ENCODE measurements at regions of chr6 and their contacts with region 1.

Region 1: GRCh38 chr6:81889377-81890053 is 137.0 kb upstream of the TENT5A start:
- DNase-seq: no peak
- H3K4me3 ChIP-seq: no peak overlapping the region
- H3K27ac ChIP-seq: no peak overlapping the region
- H3K4me1 ChIP-seq: peaks cover 1% of the 10 kb centered on the region
- H3K27me3 ChIP-seq: no peaks in the 10 kb centered on the region
- CTCF ChIP-seq: no peak
- EP300 ChIP-seq: no peak
- POLR2A ChIP-seq: no peak

Region 2: GRCh38 chr6:81766482-81767069 is 122.9 kb before region 1 on chr6:
- intact Hi-C with region 1: loop called in 1 of 4 experiments (anchors 10 kb)
- DNase-seq: no peak
- H3K4me3 ChIP-seq: no peak overlapping the region
- H3K27ac ChIP-seq: no peak overlapping the region
- H3K4me1 ChIP-seq: peaks cover 3% of the 10 kb centered on the region
- H3K27me3 ChIP-seq: no peaks in the 10 kb centered on the region
- CTCF ChIP-seq: no peak
- EP300 ChIP-seq: no peak
- POLR2A ChIP-seq: no peak

Region 3: DNA sequence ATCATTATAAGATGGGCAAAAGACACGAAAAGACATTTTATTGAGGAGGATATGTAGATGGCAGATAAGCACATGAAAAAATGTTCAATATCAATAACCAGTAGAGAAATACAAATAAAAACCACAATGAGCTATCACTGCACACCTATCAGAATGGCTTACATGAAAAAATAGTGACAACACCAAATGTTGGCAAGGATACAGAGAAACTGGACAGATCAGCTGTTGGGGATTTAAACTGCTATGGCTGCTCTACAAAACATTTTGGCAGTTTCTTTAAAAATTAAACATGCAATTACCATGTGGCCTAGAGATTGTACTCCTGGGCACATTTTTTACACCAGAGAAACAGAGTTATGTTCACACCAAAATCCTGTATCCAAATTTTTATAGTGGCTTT is 35.7 kb after region 1 on chr6:
- intact Hi-C with region 1: no loop called
- DNase-seq: no peak
- H3K4me3 ChIP-seq: no peak overlapping the region
- H3K27ac ChIP-seq: no peak overlapping the region
- H3K4me1 ChIP-seq: no peaks in the 10 kb centered on the region
- H3K27me3 ChIP-seq: no peaks in the 10 kb centered on the region
- CTCF ChIP-seq: no peak
- EP300 ChIP-seq: no peak
- POLR2A ChIP-seq: no peak